Activated T-helper 1 cell treated with anti-CD3 and anti-CD28 coated beads, Interleukin-12 subunit alpha, Interleukin-12 subunit beta, Interleukin-2, Interleukin-4 antibody, amounts not matched to agents 30 ng/mL and 10 ng/mL and 1 ng/mL, durations not matched to agents 14 hours and 24 hours and 36 hours (primary cell): ENCODE measurements at regions of chr6 and their contacts with region 1.

Region 1: GRCh38 chr6:108446629-108447150 is 114.0 kb upstream of the FOXO3 start:
- DNase-seq: no peak
- H3K4me3 Mint-ChIP-seq: no peak overlapping the region
- H3K27ac Mint-ChIP-seq: no peak overlapping the region
- H3K4me1 Mint-ChIP-seq: peaks cover 10% of the 10 kb centered on the region
- H3K27me3 Mint-ChIP-seq: peaks cover 38% of the 10 kb centered on the region

Region 2: GRCh38 chr6:108312605-108313004 is 134.1 kb before region 1 on chr6:
- intact Hi-C with region 1: no loop called
- DNase-seq: no peak
- H3K4me3 Mint-ChIP-seq: no peak overlapping the region
- H3K27ac Mint-ChIP-seq: no peak overlapping the region
- H3K4me1 Mint-ChIP-seq: peaks cover 7% of the 10 kb centered on the region
- H3K27me3 Mint-ChIP-seq: peaks cover 2% of the 10 kb centered on the region

Region 3: DNA sequence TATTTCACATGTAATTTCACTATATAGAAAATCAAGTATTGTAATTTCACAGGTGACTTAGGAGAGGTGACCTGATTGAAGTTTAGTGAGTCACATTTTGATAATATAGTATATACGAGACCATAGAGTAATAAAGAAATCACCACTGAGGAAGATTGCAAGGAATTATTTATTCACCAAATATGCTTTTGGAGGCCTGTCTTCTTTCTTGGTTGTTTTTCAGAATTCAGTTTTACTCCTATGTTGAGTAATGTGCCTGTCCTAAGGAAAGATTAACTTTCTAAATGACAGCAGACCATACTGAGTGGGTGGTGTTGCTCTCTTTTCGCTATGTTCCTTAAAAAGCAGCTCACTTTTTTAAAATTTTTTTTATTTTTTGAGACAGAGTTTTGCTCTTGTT is 26.5 kb after region 1 on chr6:
- intact Hi-C with region 1: loop called (anchors 1 kb)
- DNase-seq: no peak
- H3K4me3 Mint-ChIP-seq: no peak overlapping the region
- H3K27ac Mint-ChIP-seq: no peak overlapping the region
- H3K4me1 Mint-ChIP-seq: no peaks in the 10 kb centered on the region
- H3K27me3 Mint-ChIP-seq: peaks cover 36% of the 10 kb centered on the region